Activated CD4-positive, alpha-beta T cell treated with anti-CD3 and anti-CD28 coated beads, Interleukin-2, amount 10 ng/mL, durations not matched to agents 24 days and 14 days (primary cell): ENCODE measurements at regions of chr13 and their contacts with region 1.

Region 1: DNA sequence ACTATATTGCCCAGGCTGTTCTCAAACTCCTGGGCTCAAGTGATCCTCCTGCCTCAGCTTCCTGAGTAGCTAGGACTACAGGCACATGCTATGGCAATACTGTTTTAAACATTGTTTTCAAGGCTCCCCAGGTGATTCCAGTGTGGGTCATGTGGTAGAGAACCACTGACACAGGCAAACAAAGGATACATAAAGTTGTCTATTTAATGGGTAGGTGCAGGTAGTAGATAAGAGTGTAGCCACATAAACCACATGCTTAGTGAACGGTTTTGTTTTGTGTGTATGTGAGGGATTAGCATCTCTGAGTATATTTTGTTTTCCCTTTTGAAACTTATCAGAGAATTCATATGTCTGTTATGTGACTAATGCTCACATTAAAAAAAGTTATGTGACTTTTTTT is 36.7 kb downstream of the USPL1 start:
- DNase-seq: peak; percentile 86
- H3K4me3 Mint-ChIP-seq: peak overlapping the region; percentile 66
- H3K27ac Mint-ChIP-seq: peak overlapping the region; percentile 85
- H3K4me1 Mint-ChIP-seq: peaks cover 32% of the 10 kb centered on the region
- H3K27me3 Mint-ChIP-seq: no peaks in the 10 kb centered on the region

Region 2: DNA sequence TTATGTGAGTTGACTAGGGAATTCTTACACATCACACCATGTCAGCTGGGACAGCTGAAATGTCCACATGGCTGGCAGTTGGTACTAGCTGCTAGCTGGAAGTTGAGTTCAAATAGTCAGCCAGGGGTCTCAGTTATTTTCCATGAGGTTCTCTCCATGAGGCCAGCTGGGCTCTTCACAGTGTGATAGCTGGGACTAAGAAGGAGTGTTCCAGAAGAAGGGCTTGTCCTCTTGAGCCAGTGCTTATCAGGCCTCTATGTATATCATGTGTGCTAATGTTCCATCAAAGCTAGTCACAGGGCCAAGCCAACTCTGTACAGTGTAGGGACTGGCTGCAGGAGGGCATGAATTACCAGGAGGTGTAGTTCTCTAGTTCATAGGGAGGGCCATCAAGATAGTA is 24.9 kb before region 1 on chr13:
- intact Hi-C with region 1: loop called (anchors 1 kb)
- DNase-seq: no peak
- H3K4me3 Mint-ChIP-seq: no peak overlapping the region
- H3K27ac Mint-ChIP-seq: no peak overlapping the region
- H3K4me1 Mint-ChIP-seq: peaks cover 35% of the 10 kb centered on the region
- H3K27me3 Mint-ChIP-seq: no peaks in the 10 kb centered on the region

Region 3: DNA sequence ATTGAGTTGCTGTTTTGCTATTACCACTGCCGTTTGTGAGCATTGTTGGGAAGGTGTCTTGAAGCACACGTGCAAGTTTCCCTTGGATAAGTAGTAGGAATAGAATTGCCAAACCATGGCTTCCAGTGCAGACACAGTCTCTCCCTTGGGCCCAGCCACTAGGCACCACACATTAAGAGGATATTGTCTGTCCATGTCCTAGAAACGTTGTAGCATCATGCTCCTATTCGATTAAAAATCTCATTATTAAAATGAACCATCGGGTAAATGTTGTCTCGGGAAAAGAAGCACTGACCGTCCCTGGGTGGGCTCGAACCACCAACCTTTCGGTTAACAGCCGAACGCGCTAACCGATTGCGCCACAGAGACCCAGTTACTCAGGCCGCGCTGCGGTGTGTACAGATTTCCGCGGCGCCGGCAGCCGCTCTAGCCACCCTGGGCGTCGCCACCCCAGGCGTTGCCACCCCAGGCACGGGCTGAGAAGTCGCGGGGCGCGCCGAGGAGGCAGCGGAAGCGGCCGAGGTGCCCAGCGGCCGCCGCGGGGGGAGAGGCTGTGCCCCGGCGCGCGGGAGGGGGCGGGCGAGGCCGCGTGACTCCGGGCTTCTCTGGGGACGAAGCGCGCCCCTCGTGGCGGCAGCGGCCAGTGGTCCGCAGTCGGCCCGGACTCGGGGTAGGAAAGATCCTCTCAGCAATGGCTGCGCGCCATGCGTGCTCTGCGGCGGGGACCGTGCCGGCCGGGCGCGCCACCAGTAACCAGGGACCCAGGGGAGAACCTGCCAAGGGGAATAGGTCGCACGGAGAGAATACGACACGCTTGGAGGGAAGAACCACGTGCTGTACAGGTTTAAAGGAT is 19.5 kb after region 1 on chr13:
- intact Hi-C with region 1: loop called (anchors 2 kb)
- DNase-seq: peak; percentile 96
- H3K4me3 Mint-ChIP-seq: peak overlapping the region; percentile 86
- H3K27ac Mint-ChIP-seq: peak overlapping the region; percentile 80
- H3K4me1 Mint-ChIP-seq: peaks cover 9% of the 10 kb centered on the region
- H3K27me3 Mint-ChIP-seq: peaks cover 25% of the 10 kb centered on the region